Activated T-helper 1 cell treated with anti-CD3 and anti-CD28 coated beads, Interleukin-12 subunit alpha, Interleukin-12 subunit beta, Interleukin-2, Interleukin-4 antibody, amounts not matched to agents 30 ng/mL and 10 ng/mL and 1 ng/mL, durations not matched to agents 14 hours and 24 hours and 36 hours (primary cell): ENCODE measurements at regions of chr1 and their contacts with region 1.

Region 1: GRCh38 chr1:70354332-70355110 is at the start of gene ANKRD13C:
- DNase-seq: peak; percentile 88
- H3K4me3 Mint-ChIP-seq: peak within 1 kb of the TSS; percentile 89
- H3K27ac Mint-ChIP-seq: peak within 1 kb of the TSS; percentile 95
- H3K4me1 Mint-ChIP-seq: peaks cover 27% of the 10 kb centered on the region
- H3K27me3 Mint-ChIP-seq: no peaks in the 10 kb centered on the region
- total RNA-seq, gene ANKRD13C: 25.5 and 26.5 TPM in 2 replicates

Region 2: GRCh38 chr1:70205434-70206118 is 148.9 kb before region 1 on chr1 and contains the start of gene LRRC40:
- intact Hi-C with region 1: loop called (anchors 1 kb)
- DNase-seq: peak; percentile 96
- H3K4me3 Mint-ChIP-seq: peak within 1 kb of the TSS; percentile 100
- H3K27ac Mint-ChIP-seq: peak within 1 kb of the TSS; percentile 96
- H3K4me1 Mint-ChIP-seq: peaks cover 64% of the 10 kb centered on the region
- H3K27me3 Mint-ChIP-seq: no peaks in the 10 kb centered on the region
- total RNA-seq, gene LRRC40: 22.6 and 23.4 TPM in 2 replicates

Region 3: GRCh38 chr1:71001624-71002023 is 647.1 kb after region 1 on chr1:
- intact Hi-C with region 1: no loop called
- DNase-seq: no peak
- H3K4me3 Mint-ChIP-seq: no peak overlapping the region
- H3K27ac Mint-ChIP-seq: no peak overlapping the region
- H3K4me1 Mint-ChIP-seq: no peaks in the 10 kb centered on the region
- H3K27me3 Mint-ChIP-seq: no peaks in the 10 kb centered on the region

Region 4: GRCh38 chr1:71068325-71069240 is 714.1 kb after region 1 on chr1:
- intact Hi-C with region 1: loop called (anchors 5 kb)
- DNase-seq: no peak
- H3K4me3 Mint-ChIP-seq: no peak overlapping the region
- H3K27ac Mint-ChIP-seq: peak overlapping the region; percentile 61
- H3K4me1 Mint-ChIP-seq: peaks cover 41% of the 10 kb centered on the region
- H3K27me3 Mint-ChIP-seq: no peaks in the 10 kb centered on the region

Region 5: GRCh38 chr1:71448326-71449010 is 1093.9 kb after region 1 on chr1:
- intact Hi-C with region 1: no loop called
- DNase-seq: no peak
- H3K4me3 Mint-ChIP-seq: no peak overlapping the region
- H3K27ac Mint-ChIP-seq: no peak overlapping the region
- H3K4me1 Mint-ChIP-seq: no peaks in the 10 kb centered on the region
- H3K27me3 Mint-ChIP-seq: no peaks in the 10 kb centered on the region